ENCODE measurements at regions of chr14 and their contacts with region 1.

Region 1: DNA sequence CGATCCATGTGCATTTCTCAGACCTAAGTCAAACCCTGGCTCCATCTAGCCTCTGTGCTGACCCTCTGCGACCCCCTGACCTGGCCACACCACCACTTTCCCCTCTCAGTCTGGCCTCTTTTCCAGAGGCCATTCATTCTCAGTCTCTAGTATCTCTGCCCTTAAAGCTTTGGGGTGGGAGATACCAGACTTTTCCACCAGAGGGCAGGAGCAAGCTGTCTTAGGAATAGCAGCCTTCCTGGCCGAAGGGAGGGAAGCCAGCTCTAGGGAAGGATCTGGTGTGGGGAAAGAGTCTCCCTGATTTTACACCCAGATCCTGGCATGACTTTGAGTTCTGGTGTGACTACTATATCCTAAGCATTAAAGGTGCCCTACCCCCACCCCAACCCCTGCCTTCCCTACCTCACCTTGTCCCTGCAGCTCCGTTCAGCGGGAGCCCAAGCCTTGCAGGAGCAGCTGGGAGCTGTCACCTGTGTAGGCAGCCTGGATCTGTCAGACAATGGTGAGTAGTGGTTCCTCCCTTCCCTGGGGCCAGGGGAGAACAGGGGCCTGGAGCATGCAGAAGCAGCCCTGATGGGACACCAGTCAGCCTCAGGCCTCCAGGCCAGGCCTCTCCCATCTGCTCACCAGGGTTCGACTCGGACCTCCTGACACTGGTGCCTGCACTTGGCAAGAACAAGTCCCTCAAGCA is 6.6 kb downstream of the CARMIL3 start:
- DNase-seq: peak in 1 of 2 experiments; percentile 84
- H3K4me3 ChIP-seq: no peak overlapping the region
- H3K27ac ChIP-seq: no peak overlapping the region
- H3K4me1 ChIP-seq: 0 out of 7 replicates have a peak, but pooled peaks cover 0 to 2% (median 0%) of the 10 kb centered on the region in 4 experiments
- H3K27me3 ChIP-seq: no peaks in the 10 kb centered on the region
- CTCF ChIP-seq: peak in 2 of 3 experiments; percentile 84 to 93; a peak in 3 of 4 replicates
- EP300 ChIP-seq: no peak
- POLR2A ChIP-seq: no peak
- RAD21 ChIP-seq: peak; percentile 93 to 97

Region 2: DNA sequence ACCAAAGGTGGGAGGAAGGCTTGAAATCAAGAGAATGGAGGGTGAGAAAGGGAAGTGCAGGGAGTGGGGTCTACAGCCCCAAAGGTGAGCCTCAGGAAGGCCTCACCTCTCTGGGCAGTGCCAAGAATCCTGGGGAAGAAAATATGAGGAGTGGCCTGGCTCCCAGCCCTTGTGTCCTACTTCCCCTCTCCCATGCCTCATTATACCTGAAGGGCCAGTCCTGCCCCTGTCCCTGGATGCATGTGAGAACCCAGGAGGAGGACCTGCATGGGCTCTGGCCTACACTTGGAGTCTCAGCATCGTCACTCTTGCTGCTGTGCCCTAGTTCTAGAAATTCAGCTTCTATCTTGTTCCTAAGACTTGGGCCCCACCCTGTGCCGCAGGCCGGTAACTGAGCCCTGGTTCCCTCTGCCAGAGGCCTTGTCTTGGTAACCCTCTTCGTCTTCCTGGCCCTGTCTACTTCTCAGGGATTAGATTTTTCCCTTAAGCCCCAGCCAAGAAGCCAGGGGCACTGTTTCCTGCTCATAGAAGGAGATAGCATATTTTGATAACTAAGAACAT is 612.0 kb before region 1 on chr14:
- CTCF ChIA-PET with region 1: no interaction called
- POLR2A ChIA-PET with region 1: no interaction called
- DNase-seq: no peak
- H3K4me3 ChIP-seq: no peak overlapping the region
- H3K27ac ChIP-seq: no peak overlapping the region
- H3K4me1 ChIP-seq: peaks cover 2 to 12% (median 9%) of the 10 kb centered on the region in 4 experiments
- H3K27me3 ChIP-seq: no peaks in the 10 kb centered on the region; a peak in 2 of 7 replicates
- CTCF ChIP-seq: peak in 2 of 3 experiments; percentile 12 to 27; a peak in 2 of 4 replicates
- EP300 ChIP-seq: no peak
- POLR2A ChIP-seq: no peak
- RAD21 ChIP-seq: peak; percentile 38 to 56; a peak in 3 of 4 replicates

Region 3: DNA sequence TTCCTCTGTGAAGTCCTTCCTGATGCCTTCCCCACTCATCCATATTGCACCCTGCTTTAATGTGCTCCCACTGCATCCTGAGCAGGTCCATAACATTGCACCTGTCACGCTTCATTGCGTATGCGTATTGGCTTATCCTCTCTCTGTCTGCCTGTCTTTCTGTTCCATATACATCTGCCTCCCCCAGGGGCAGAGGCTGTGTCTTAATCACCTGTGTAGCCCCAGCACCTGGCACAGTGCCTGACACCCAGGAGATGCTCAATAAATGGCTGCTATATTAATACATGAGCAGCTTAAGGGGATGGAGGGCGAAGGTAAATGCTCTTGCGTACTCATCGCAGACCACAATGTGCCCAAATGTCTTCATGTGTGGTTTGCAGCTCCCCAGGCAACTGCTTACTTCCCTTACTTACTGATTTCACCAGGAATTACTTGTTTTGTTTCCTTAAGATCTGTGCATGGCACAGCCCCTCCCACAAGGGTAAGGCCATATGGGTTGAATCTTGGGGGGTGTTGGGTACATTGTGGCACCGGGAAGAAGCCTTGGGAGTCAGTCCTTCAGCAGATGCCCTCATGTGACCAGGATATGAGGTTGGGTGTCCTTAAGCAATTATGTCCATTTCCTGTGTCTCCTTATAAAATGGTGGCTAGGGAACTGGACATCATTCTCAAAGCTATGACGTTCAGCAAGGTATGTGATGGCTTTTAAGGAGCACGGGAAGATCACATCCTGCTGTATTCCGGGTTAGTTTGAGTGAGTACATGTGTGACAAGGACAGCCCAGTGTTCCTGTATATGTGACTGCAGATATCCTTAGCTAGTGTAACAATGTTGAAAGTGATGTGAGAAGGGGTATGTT is 12.1 kb after region 1 on chr14:
- CTCF ChIA-PET with region 1: interaction called, 35 read pairs
- POLR2A ChIA-PET with region 1: interaction called, 14 read pairs
- DNase-seq: no peak
- H3K4me3 ChIP-seq: no peak overlapping the region
- H3K27ac ChIP-seq: no peak overlapping the region
- H3K4me1 ChIP-seq: no peaks in the 10 kb centered on the region
- H3K27me3 ChIP-seq: no peaks in the 10 kb centered on the region; a peak in 1 of 7 replicates
- CTCF ChIP-seq: no peak
- EP300 ChIP-seq: no peak
- POLR2A ChIP-seq: no peak
- RAD21 ChIP-seq: no peak

Region 4: GRCh38 chr14:24080888-24081738 is 22.7 kb after region 1 on chr14:
- CTCF ChIA-PET with region 1: interaction called, 61 read pairs
- POLR2A ChIA-PET with region 1: interaction called, 36 read pairs
- DNase-seq: peak in 1 of 2 experiments; percentile 81
- H3K4me3 ChIP-seq: peak overlapping the region; percentile 54 to 67 (median 66)
- H3K27ac ChIP-seq: no peak overlapping the region
- H3K4me1 ChIP-seq: peaks cover 0 to 18% (median 12%) of the 10 kb centered on the region in 4 experiments; a peak in 6 of 7 replicates
- H3K27me3 ChIP-seq: peaks cover 0 to 10% (median 7%) of the 10 kb centered on the region in 4 experiments; a peak in 5 of 7 replicates
- CTCF ChIP-seq: no peak
- EP300 ChIP-seq: no peak
- POLR2A ChIP-seq: peak in 1 of 2 experiments; percentile 50; a peak in 1 of 3 replicates
- RAD21 ChIP-seq: no peak

Region 5: GRCh38 chr14:24100197-24100981 is 42.0 kb after region 1 on chr14:
- CTCF ChIA-PET with region 1: interaction called, 316 read pairs
- POLR2A ChIA-PET with region 1: interaction called, 626 read pairs
- DNase-seq: no peak
- H3K4me3 ChIP-seq: no peak overlapping the region
- H3K27ac ChIP-seq: no peak overlapping the region
- H3K4me1 ChIP-seq: peaks cover 0 to 4% (median 4%) of the 10 kb centered on the region in 4 experiments; a peak in 6 of 7 replicates
- H3K27me3 ChIP-seq: no peaks in the 10 kb centered on the region
- CTCF ChIP-seq: no peak
- EP300 ChIP-seq: no peak
- POLR2A ChIP-seq: no peak; a peak in 1 of 3 replicates
- RAD21 ChIP-seq: no peak

Region 6: GRCh38 chr14:24114536-24115450 is 56.4 kb after region 1 on chr14 and contains the starts of genes DCAF11 and NRL:
- CTCF ChIA-PET with region 1: interaction called, 142 read pairs
- POLR2A ChIA-PET with region 1: interaction called, 626 read pairs
- DNase-seq: peak; percentile 96 to 99
- H3K4me3 ChIP-seq: peak within 1 kb of the TSS; percentile 68 to 89 (median 76)
- H3K27ac ChIP-seq: peak within 1 kb of the TSS; percentile 97
- H3K4me1 ChIP-seq: peaks cover 0 to 4% (median 2%) of the 10 kb centered on the region in 4 experiments; a peak in 5 of 7 replicates
- H3K27me3 ChIP-seq: no peaks in the 10 kb centered on the region
- CTCF ChIP-seq: no peak
- EP300 ChIP-seq: no peak
- POLR2A ChIP-seq: peak; percentile 45 to 75
- RAD21 ChIP-seq: no peak
- total RNA-seq, gene DCAF11: 63.6 and 67.2 TPM in 2 replicates
- total RNA-seq, gene NRL: 1.1 TPM in 2 replicates

Region 7: DNA sequence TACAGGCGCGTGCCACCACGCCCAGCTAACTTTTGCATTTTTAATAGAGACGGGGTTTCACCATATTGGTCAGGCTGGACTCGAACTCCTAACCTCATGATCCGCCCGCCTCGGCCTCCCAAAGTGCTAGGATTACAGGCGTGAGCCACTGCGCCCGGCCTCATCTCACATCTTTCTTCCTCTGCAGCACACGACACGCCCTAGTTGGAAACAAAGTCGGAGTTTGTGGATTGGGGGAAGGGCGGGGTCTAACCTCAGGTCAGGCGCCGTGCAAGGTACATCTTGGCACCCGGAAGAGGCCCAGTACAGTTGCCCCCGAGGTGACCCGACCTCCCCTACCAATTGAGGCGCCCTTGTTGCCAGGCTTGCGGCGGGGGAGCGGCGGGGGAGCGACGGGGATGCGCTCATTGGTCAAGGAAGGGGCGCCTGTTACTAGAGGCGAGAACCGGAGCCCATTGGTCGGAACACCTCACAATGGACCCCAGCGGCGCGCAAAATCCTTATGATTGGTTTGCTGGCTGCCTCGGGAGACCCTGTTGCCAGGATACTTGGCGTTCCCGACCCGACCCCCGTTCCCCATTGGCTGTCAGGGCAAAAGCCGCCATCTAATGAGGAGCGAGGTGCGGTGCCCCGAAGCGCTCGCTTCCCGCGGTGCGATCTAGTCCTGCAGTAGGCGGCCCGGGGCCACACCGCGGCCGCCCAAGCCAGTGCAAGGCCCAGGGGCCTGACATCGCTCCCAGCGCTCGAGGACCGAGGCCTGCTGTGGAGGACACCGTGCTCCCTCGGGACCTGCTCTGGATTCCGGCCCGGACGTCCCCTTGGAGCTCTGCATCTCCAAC is 113.2 kb after region 1 on chr14 and contains the start of gene REC8:
- CTCF ChIA-PET with region 1: no interaction called
- POLR2A ChIA-PET with region 1: no interaction called
- DNase-seq: peak; percentile 97
- H3K4me3 ChIP-seq: peak within 1 kb of the TSS; percentile 62 to 77 (median 71)
- H3K27ac ChIP-seq: no peak within 1 kb of the TSS
- H3K4me1 ChIP-seq: peaks cover 0 to 9% (median 7%) of the 10 kb centered on the region in 4 experiments; a peak in 4 of 7 replicates
- H3K27me3 ChIP-seq: no peaks in the 10 kb centered on the region
- CTCF ChIP-seq: peak in 1 of 3 experiments; percentile 7; a peak in 1 of 4 replicates
- EP300 ChIP-seq: peak in 1 of 2 experiments; percentile 69; a peak in 1 of 3 replicates
- POLR2A ChIP-seq: peak in 1 of 2 experiments; percentile 44; a peak in 1 of 3 replicates
- RAD21 ChIP-seq: 0 out of 4 replicates have a peak, but pooled peaks of 1 of the 2 experiments have one; percentile 6
- total RNA-seq, gene REC8: 25.8 and 28.5 TPM in 2 replicates